BJ (cell line): ENCODE measurements at regions of chr15 and their contacts with region 1.

Region 1: DNA sequence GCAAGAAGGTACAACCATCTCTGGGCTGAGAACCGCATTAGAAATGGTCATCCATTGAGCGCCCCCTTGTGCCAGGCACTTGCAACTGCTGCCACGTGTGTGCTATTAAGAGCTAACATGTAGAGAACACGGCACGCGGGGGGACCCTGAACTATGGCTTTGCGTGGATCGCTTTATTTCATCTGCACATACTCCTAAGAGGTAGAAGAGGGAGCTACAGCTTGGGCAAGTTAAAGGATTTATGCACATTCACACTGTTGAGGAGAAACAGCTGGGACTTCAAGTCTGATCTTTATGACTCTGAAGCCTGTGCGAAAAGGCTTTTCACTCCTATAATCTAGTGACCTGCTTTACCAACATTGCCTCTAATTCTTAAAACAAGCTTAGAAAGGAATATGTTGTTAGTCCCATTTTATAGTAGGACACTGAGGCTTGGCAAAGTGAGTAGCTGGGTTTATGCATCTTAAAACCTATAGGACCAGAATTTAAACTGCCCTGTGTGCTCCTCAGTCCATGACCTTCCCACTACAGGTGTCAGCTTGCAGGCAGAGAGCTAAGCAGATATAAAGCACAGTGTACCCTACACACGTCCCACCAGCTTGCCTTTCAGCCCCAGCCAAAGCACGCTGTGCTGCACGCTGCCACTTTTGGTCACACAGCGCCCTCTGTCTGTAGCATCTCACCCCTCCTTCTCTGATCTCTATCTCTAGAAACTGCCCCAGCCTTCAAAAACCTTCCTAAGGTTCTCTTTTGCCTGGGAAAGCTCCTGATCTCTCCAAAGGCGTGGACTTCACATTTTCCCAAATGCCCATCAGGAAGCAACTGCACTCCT is 57.8 kb downstream of the STARD5 start:
- DNase-seq: no peak
- H3K4me3 ChIP-seq: no peak overlapping the region
- H3K27me3 ChIP-seq: peaks cover 4% of the 10 kb centered on the region
- CTCF ChIP-seq: peak; percentile 96

Region 2: GRCh38 chr15:80977627-80978036 is 288.5 kb before region 1 on chr15:
- CTCF ChIA-PET with region 1: interaction called, 53 read pairs
- POLR2A ChIA-PET with region 1: no interaction called
- DNase-seq: no peak
- H3K4me3 ChIP-seq: no peak overlapping the region
- H3K27me3 ChIP-seq: no peaks in the 10 kb centered on the region
- CTCF ChIP-seq: peak; percentile 73

Region 3: DNA sequence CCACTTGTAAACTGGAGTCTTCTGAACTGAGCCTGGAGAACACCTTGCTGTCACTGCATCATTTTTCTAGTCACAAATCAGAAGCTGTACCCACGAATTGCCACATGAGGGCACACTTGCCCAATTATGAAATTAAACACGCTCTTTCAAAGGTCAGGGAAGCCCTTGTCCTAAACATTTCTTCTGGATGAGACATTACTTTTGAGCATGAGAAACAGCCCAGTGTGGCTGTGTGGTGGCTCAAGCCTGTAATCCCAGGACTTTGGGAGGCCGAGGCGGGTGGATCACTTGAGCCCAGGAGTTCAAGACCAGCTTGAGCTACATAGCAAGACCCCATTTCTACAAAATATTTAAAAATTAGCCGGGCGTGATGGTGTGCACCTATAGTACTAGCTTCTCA is 159.6 kb before region 1 on chr15:
- CTCF ChIA-PET with region 1: interaction called, 378 read pairs
- POLR2A ChIA-PET with region 1: interaction called, 3 read pairs
- DNase-seq: peak; percentile 16
- H3K4me3 ChIP-seq: no peak overlapping the region
- H3K27me3 ChIP-seq: peaks cover 4% of the 10 kb centered on the region; the same call in 1 of the 2 replicates
- CTCF ChIP-seq: peak; percentile 72

Region 4: DNA sequence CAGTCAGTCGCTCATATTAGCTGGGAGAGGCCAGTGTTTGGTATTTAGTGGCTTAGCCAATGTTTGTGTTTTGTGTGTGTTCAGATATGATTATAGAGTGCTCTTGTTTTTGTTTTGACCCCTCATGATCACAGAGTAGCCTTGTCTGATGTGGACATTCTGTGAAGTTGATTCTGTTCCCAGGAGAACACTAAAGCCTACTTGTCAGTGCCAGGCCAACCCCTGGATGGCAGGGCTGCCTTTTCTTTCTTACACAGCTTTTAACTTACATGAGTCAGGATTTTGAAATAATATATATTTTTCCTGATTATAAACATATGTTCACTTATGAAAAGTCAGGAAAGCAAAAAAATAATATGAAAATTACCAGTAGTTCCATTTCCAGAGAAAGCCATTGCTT is 120.2 kb before region 1 on chr15:
- CTCF ChIA-PET with region 1: interaction called, 127 read pairs
- POLR2A ChIA-PET with region 1: no interaction called
- DNase-seq: no peak
- H3K4me3 ChIP-seq: no peak overlapping the region
- H3K27me3 ChIP-seq: no peaks in the 10 kb centered on the region
- CTCF ChIP-seq: no peak

Region 5: DNA sequence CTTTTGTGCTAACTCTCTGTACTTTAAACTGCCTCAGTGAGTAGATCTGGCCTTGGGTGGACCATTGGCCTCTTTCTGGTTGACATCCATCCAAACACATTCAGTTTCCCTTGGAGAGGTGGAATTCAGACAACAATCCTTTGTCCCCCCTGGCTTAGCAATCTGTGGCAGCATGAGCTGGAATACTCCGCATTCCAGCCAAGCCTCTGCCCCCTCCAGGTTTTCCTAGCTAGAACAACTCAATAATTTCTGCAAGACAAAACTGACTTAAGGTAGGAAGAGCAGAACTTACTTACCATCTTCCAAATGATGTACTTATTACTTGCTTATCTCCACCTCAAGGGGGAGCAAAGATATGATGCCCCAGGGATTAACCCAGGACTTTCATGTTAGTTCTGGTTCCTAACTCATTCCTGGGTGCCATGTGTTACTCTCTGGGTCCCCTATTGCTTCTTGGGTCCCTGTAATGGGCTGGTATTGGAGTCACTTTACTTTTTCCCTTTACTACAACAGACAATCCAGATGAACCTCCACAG is 91.3 kb before region 1 on chr15:
- CTCF ChIA-PET with region 1: interaction called, 18 read pairs
- POLR2A ChIA-PET with region 1: no interaction called
- DNase-seq: no peak
- H3K4me3 ChIP-seq: no peak overlapping the region
- H3K27me3 ChIP-seq: peaks cover 2% of the 10 kb centered on the region
- CTCF ChIP-seq: peak; percentile 13; the same call in 1 of the 2 replicates

Region 6: DNA sequence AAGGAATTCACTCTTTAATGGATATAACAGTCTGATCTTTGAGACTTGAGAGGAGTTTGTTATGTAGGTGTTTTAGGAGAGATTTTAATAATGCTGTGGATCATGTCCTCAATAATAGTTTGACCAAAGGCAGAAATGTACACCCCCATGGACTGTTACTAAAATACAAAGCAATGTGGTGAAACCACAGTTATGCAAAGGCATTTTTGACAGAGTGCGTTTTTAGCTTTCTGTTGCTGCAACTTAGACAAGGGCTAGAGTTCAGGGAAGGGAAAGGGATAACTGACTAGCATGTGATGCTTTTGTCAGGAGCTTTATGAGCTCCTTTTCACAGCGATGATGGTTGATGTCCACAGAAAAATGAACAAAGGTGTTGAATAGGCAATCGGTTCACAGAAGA is 61.4 kb after region 1 on chr15:
- CTCF ChIA-PET with region 1: interaction called, 14 read pairs
- POLR2A ChIA-PET with region 1: no interaction called
- DNase-seq: peak; percentile 80
- H3K4me3 ChIP-seq: no peak overlapping the region
- H3K27me3 ChIP-seq: peaks cover 1% of the 10 kb centered on the region; the same call in 1 of the 2 replicates
- CTCF ChIP-seq: no peak

Region 7: DNA sequence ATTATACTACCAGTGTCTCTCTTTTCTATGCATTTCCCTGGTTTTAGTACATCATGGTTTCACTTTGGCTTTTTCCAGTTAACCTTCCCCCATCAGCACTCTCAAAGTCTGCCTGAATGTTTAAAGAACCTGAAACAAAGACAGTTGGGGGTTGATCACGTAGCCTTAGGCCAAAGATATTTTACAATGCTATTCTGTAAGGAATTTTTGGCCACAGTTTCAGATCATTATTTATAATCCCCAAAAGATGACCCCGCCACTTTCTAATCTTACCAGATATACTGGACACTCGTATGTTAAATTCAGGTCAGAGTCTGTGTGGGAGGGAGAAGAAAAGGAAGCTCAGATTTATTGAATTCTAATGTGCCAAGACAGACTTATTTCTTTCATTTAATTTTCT is 264.2 kb after region 1 on chr15:
- CTCF ChIA-PET with region 1: no interaction called
- POLR2A ChIA-PET with region 1: no interaction called
- DNase-seq: no peak
- H3K4me3 ChIP-seq: no peak overlapping the region
- H3K27me3 ChIP-seq: no peaks in the 10 kb centered on the region
- CTCF ChIP-seq: no peak